WTC11 (cell line): ENCODE measurements at regions of chr16 and their contacts with region 1.

Region 1: GRCh38 chr16:30112197-30113030 is 923 bp downstream of the GDPD3 start:
- DNase-seq: peak; percentile 82
- ATAC-seq: peak; percentile 83
- H3K4me3 Mint-ChIP-seq: no peak overlapping the region
- H3K27ac Mint-ChIP-seq: no peak overlapping the region
- H3K4me1 Mint-ChIP-seq: peaks cover 3% of the 10 kb centered on the region
- H3K27me3 Mint-ChIP-seq: no peaks in the 10 kb centered on the region
- CTCF ChIP-seq: peak; percentile 90

Region 2: DNA sequence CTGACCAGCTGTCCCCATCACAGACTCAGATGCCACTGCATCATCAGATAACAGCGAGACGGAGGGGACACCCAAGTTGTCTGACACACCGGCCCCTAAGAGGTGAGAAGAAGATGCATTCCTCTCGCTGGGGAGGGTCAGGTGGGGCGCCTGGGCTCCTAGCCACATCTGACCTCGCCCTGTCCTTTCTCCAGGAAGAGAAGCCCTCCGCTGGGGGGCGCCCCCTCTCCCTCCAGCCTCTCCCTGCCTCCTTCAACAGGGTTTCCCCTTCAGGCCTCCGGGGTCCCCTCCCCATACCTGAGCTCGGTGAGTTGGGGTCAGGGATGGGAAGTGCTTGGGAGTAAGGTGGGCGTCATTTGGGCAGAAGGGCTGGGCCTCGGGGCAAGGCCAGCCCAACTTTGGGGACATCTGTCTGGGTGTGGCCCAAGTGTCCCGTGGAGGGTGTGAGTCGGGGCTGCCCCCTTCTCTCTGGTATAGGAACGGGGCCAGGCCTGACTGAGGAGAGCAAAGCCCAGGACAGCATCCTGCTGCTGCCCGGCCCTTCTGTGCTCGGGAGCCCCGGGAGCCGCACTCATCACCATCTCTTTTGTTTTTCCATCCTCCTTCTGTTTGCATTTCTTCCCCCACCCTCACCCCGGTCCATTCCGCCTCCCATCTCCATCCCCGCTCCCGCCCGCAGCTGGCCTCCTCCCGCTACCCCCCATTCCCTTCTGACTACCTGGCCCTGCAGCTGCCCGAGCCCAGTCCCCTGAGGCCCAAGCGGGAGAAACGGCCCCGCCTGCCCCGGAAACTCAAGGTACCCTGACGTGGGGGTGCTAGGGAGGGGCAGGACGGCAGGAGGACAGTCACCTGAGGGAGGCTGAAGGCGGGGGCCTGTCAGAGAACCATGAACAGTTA is 111.4 kb before region 1 on chr16:
- CTCF ChIA-PET with region 1: no interaction called
- POLR2A ChIA-PET with region 1: no interaction called
- DNase-seq: peak; percentile 77
- ATAC-seq: peak; percentile 31
- H3K4me3 Mint-ChIP-seq: peak overlapping the region; percentile 24; the same call in 1 of the 2 replicates
- H3K27ac Mint-ChIP-seq: no peak overlapping the region; the same call in 1 of the 2 replicates
- H3K4me1 Mint-ChIP-seq: peaks cover 17% of the 10 kb centered on the region
- H3K27me3 Mint-ChIP-seq: no peaks in the 10 kb centered on the region
- CTCF ChIP-seq: 0 out of 2 replicates have a peak, but pooled peaks have one; percentile 33

Region 3: GRCh38 chr16:30052671-30053372 is 59.6 kb before region 1 on chr16:
- CTCF ChIA-PET with region 1: interaction called, 17 read pairs
- POLR2A ChIA-PET with region 1: no interaction called
- DNase-seq: peak; percentile 94
- ATAC-seq: peak; percentile 60
- H3K4me3 Mint-ChIP-seq: peak overlapping the region; percentile 82
- H3K27ac Mint-ChIP-seq: no peak overlapping the region
- H3K4me1 Mint-ChIP-seq: peaks cover 14% of the 10 kb centered on the region
- H3K27me3 Mint-ChIP-seq: peaks cover 37% of the 10 kb centered on the region
- CTCF ChIP-seq: no peak

Region 4: DNA sequence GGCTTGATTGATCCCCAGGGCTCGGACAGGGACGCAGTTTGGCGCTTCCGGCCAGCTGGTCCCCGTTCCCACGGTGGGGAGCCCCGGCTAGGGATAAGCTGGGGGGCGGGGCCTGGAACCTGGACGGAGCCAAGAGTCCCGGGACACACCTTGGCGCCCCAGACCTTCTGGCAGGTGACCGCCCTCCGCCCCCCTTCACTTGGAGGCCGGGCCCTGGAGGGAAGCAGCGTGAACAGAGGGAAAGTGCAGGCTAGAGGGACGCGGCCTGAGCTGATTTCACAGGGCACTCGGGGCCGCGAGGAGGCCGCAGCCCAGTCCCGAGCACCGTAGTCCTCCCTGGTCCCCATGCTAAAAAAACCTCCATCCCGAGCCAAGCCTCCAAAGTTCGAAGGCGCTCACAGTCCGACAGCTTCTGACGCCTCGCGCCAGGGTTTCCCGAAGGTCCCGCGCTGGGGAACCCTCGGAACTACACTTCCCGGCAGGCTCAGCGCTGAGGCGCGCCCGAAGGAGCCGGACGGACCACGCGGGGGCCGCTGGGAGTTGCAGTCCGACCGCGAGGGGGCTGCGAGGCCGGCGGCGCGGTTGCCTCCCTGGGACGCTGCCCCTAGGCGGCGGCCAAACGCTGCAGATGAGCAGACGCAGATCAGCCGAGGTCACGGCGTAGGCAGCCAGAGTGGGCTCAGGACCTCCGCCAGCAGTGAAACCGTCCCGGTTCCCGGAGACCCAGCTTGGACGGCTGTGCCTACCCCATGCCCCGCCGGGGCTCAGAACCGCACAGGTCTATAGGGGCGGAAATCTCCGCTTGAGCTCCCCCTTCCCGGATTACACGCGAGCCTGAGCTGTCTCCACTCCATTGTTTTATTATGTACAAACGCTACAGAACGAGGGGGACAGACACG is 20.7 kb before region 1 on chr16 and contains the start of gene TBX6:
- CTCF ChIA-PET with region 1: interaction called, 129 read pairs
- POLR2A ChIA-PET with region 1: interaction called, 7 read pairs
- DNase-seq: peak; percentile 97
- ATAC-seq: peak; percentile 69
- H3K4me3 Mint-ChIP-seq: peak within 1 kb of the TSS; percentile 87
- H3K27ac Mint-ChIP-seq: peak within 1 kb of the TSS; percentile 98
- H3K4me1 Mint-ChIP-seq: peaks cover 27% of the 10 kb centered on the region
- H3K27me3 Mint-ChIP-seq: peaks cover 3% of the 10 kb centered on the region
- CTCF ChIP-seq: no peak
- total RNA-seq, gene TBX6: 5.1 to 7.6 TPM (median 6.6 TPM) in 3 replicates

Region 5: DNA sequence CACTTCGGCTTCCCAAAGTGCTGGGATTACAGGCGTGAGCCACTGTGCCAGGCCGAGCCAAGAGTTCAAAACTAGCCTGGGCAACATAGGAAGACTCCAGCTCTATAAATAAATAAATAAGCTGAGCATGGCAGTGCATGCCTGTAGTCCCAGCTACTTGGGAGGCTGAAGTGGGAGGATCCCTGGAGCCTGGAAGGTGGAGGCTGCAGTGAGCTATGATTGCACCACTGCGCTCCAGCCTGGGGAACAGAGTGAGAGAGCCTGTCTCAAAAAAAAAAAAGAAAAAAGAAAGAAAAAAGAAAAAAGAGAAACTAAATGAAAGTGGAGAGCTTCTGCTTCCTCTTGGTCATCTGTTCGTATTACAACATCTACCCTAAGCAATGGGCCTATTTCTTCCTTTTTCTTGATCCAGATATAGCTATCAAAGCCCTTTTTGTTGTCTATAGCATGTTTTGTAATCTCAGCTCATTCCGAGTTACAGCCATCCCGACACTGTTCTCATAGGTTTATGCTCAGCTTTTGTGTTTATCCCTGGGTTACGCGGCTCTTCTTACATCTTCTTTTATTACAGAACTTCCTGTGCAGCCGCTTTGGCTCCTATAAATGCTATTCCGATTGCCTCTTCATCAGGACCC is 24.7 kb after region 1 on chr16:
- CTCF ChIA-PET with region 1: interaction called, 13 read pairs
- POLR2A ChIA-PET with region 1: no interaction called
- DNase-seq: no peak
- ATAC-seq: no peak
- H3K4me3 Mint-ChIP-seq: no peak overlapping the region
- H3K27ac Mint-ChIP-seq: no peak overlapping the region
- H3K4me1 Mint-ChIP-seq: no peaks in the 10 kb centered on the region
- H3K27me3 Mint-ChIP-seq: peaks cover 26% of the 10 kb centered on the region
- CTCF ChIP-seq: no peak

Region 6: GRCh38 chr16:30183233-30184095 is 71.0 kb after region 1 on chr16 and contains the start of gene CORO1A:
- CTCF ChIA-PET with region 1: interaction called, 19 read pairs
- POLR2A ChIA-PET with region 1: no interaction called
- DNase-seq: peak; percentile 86
- ATAC-seq: peak; percentile 78
- H3K4me3 Mint-ChIP-seq: peak within 1 kb of the TSS; percentile 74
- H3K27ac Mint-ChIP-seq: no peak within 1 kb of the TSS
- H3K4me1 Mint-ChIP-seq: peaks cover 7% of the 10 kb centered on the region
- H3K27me3 Mint-ChIP-seq: peaks cover 51% of the 10 kb centered on the region
- CTCF ChIP-seq: no peak
- total RNA-seq, gene CORO1A: 6.2 to 10.0 TPM (median 6.5 TPM) in 3 replicates

Region 7: DNA sequence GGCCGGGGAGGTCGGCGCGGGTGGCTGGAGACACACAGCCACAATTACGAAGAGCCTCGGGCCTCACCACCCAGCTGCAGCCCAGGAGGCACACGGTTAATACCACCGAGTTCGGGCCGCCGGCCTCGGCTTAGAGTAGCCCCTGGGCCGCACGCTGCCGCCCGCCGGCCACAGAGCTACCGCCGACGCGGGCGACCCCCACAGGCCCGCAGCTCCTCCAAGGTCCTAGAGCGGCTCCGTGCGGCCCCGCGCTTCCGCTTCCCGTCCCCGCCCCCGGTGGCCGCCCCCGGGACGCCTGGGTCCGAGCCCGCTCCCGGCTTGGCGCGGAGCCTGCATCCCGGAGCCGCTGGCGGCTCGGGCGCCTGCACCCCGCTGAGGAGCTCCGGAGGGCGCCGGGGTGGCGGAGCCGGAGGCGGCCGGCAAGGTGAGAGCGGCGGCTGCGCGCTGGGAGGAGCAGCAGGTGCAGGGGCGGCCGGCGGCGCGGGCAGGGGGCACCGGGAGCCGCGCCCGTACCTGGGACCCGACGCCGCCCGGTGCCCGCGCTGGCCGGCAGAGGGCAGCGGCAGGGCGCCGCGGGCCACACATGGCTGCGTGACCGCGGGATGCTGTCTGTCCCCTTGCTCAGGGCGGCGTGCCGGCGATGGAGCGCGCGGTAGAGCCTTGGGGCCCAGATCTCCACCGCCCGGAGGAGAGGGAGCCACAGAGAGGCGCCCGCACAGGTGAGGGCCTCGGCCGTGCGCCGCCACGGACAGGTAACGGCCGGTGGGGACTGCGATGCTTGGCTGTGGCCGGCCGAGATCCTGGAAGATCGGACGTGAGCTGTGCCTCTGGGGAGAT is 283.0 kb after region 1 on chr16 and contains the start of gene ZNF48:
- CTCF ChIA-PET with region 1: interaction called, 10 read pairs
- POLR2A ChIA-PET with region 1: no interaction called
- DNase-seq: peak; percentile 85
- ATAC-seq: peak; percentile 81
- H3K4me3 Mint-ChIP-seq: peak within 1 kb of the TSS; percentile 97
- H3K27ac Mint-ChIP-seq: peak within 1 kb of the TSS; percentile 98
- H3K4me1 Mint-ChIP-seq: peaks cover 36% of the 10 kb centered on the region
- H3K27me3 Mint-ChIP-seq: peaks cover 4% of the 10 kb centered on the region; the same call in 1 of the 2 replicates
- CTCF ChIP-seq: no peak
- total RNA-seq, gene ZNF48: 31.3 to 39.3 TPM (median 32.1 TPM) in 3 replicates

Region 8: DNA sequence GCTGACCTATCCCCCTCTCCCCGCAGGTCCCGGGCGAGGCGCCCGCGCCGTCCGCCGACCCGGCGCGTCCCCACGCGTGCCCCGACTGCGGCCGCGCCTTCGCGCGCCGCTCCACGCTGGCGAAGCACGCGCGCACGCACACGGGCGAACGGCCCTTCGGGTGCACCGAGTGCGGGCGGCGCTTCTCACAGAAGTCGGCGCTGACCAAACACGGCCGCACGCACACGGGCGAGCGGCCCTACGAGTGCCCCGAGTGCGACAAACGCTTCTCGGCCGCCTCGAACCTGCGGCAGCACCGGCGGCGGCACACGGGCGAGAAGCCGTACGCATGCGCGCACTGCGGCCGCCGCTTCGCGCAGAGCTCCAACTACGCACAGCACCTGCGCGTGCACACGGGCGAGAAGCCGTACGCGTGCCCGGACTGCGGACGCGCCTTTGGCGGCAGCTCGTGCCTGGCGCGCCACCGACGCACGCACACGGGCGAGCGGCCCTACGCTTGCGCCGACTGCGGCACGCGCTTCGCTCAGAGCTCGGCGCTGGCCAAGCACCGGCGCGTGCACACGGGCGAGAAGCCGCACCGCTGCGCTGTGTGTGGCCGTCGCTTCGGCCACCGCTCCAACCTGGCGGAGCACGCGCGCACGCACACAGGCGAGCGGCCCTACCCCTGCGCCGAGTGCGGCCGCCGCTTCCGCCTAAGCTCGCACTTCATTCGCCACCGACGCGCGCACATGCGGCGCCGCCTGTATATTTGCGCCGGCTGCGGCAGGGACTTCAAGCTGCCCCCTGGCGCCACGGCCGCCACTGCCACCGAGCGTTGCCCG is 305.3 kb after region 1 on chr16:
- CTCF ChIA-PET with region 1: interaction called, 11 read pairs
- POLR2A ChIA-PET with region 1: no interaction called
- DNase-seq: peak; percentile 88
- ATAC-seq: peak; percentile 88
- H3K4me3 Mint-ChIP-seq: peak overlapping the region; percentile 54
- H3K27ac Mint-ChIP-seq: no peak overlapping the region
- H3K4me1 Mint-ChIP-seq: peaks cover 9% of the 10 kb centered on the region
- H3K27me3 Mint-ChIP-seq: no peaks in the 10 kb centered on the region
- CTCF ChIP-seq: no peak